ENCODE measurements at regions of chr22 and their contacts with region 1.

Region 1: GRCh38 chr22:31080848-31081649 is at the start of gene SMTN:
- DNase-seq: peak; percentile 98
- H3K4me3 ChIP-seq: peak within 1 kb of the TSS; percentile 61
- H3K27ac ChIP-seq: peak within 1 kb of the TSS; percentile 86
- H3K4me1 ChIP-seq: peaks cover 28% of the 10 kb centered on the region
- H3K27me3 ChIP-seq: no peaks in the 10 kb centered on the region
- CTCF ChIP-seq: no peak
- total RNA-seq, gene SMTN: 152 to 159 TPM

Region 2: GRCh38 chr22:30947816-30948454 is 133.1 kb before region 1 on chr22:
- intact Hi-C with region 1: loop called (anchors 1 kb)
- DNase-seq: no peak
- H3K4me3 ChIP-seq: no peak overlapping the region
- H3K27ac ChIP-seq: no peak overlapping the region
- H3K4me1 ChIP-seq: no peaks in the 10 kb centered on the region
- H3K27me3 ChIP-seq: no peaks in the 10 kb centered on the region
- CTCF ChIP-seq: peak; percentile 36

Region 3: DNA sequence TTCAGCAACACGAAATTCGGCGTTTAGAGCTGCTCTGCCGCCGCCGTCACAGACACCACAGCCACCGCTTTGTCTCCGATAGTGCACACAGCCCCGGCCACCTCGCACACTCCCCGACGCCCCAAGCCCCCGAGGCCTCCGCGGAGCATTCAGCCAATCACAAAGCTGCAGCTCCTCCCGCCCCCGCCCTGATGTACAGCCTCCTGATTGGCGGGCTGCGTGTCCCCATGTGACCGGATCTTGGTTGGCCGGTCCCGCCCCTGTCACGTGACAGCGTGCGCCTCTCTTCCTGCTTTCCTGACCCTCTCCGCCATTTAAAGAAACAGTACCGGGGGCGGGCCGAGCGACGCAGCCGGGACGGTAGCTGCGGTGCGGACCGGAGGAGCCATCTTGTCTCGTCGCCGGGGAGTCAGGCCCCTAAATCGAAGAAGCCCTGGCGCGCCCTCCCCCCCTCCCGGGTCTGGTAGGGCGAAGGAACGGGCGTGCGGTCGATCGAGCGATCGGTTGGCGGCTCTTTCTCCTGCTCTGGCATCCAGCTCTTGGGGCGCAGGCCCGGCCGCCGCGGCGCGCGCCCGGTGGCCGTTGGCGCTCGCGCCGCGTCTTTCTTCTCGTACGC is 112.0 kb before region 1 on chr22 and contains the start of gene TUG1:
- intact Hi-C with region 1: loop called (anchors 5 kb)
- DNase-seq: peak; percentile 98
- H3K4me3 ChIP-seq: peak within 1 kb of the TSS; percentile 68
- H3K27ac ChIP-seq: peak within 1 kb of the TSS; percentile 91
- H3K4me1 ChIP-seq: peaks cover 8% of the 10 kb centered on the region
- H3K27me3 ChIP-seq: no peaks in the 10 kb centered on the region
- CTCF ChIP-seq: no peak
- total RNA-seq, gene TUG1: 63.0 to 66.6 TPM